ENCODE measurements at regions of chr9 and their contacts with region 1.

Region 1: GRCh38 chr9:101727612-101728524 is 10.6 kb downstream of the GRIN3A start:
- DNase-seq: no peak
- ATAC-seq: peak; percentile 82
- H3K4me3 ChIP-seq: no peak overlapping the region
- H3K27ac ChIP-seq: no peak overlapping the region
- H3K4me1 ChIP-seq: no peaks in the 10 kb centered on the region
- H3K27me3 ChIP-seq: no peaks in the 10 kb centered on the region
- CTCF ChIP-seq: peak; percentile 59 to 72 (median 71)
- EP300 ChIP-seq: no peak
- POLR2A ChIP-seq: no peak
- RAD21 ChIP-seq: peak; percentile 41

Region 2: DNA sequence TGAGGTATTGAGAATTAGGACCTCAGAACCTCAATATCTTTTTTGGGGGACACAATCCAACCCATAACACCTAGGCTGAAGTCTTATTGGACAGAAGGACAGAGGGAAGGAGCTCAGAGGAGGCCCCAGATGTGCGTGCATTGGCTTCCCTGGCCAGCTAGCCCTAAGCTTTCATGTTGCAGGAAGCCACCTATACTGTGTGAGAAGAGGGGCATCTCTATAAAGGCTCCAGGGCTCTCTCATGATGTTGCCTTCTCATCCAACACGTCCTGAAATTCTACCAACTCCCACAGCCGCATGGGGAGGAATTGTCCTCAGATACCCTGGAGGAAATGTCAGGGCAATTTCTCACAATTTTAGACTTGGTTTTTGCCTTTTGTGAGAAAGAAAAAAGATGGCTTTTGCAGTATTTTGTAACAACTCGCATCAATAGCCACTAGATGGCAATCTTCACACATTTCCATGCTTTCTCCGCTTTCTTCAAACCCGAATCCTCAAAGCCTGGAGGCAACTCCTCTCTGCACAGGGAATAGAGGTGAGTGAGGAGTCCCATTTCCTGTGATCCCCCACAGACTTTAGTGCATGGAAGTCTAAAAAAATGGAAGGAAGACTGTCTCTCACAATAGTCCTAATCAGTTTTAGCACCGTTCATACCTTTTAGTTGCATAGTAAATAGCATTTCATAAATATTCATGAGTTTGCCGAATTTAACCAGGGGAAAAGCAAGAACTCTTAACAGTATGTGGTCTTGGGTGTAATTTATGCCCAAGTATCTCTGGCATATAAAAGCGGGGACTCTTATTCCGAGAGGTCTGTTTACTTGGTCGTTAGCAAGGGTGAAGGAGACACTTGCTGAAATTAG is 125.7 kb before region 1 on chr9:
- CTCF ChIA-PET with region 1: interaction called, 6 read pairs
- POLR2A ChIA-PET with region 1: no interaction called
- RAD21 ChIA-PET with region 1: no interaction called
- SMC1A ChIA-PET with region 1: no interaction called
- in situ Hi-C with region 1: no loop called
- intact Hi-C with region 1: loop called (anchors 1 kb)
- DNase-seq: no peak
- ATAC-seq: peak; percentile 71
- H3K4me3 ChIP-seq: no peak overlapping the region
- H3K27ac ChIP-seq: no peak overlapping the region
- H3K4me1 ChIP-seq: no peaks in the 10 kb centered on the region
- H3K27me3 ChIP-seq: no peaks in the 10 kb centered on the region; a peak in 1 of 4 replicates
- CTCF ChIP-seq: peak; percentile 54 to 66 (median 59)
- EP300 ChIP-seq: no peak
- POLR2A ChIP-seq: no peak
- RAD21 ChIP-seq: peak; percentile 69

Region 3: DNA sequence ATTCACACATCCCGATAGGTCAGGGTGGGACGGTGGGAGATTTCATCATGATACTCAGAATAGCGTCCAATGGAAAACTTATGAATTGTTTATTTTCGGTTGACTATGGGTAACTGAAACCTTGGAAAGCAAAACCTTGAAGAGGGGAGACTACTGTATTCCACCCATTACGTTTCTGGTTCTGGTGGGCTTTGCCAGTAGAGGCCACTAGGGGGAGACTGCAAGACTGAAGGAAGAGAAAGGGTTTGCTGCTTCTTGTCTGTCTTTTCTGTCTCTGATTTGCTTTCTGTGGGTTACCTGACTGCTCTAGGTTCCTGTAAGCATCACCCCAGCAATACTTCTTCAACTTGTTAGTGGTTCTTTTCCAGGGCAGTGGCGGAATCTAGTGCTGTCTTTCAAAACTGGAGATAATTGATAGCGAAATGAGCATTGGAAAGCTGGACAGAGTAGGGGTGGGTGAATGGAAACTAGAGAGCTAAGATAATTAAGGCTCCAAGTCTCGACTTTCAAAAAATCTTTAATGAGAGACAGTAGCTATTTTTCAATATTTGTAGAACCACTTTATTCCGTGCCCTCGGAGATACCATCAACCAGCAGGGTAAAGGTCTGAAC is 16.4 kb before region 1 on chr9:
- CTCF ChIA-PET with region 1: interaction called, 11 read pairs
- POLR2A ChIA-PET with region 1: no interaction called
- RAD21 ChIA-PET with region 1: no interaction called
- SMC1A ChIA-PET with region 1: no interaction called
- in situ Hi-C with region 1: no loop called
- intact Hi-C with region 1: no loop called
- DNase-seq: no peak
- ATAC-seq: peak; percentile 75
- H3K4me3 ChIP-seq: no peak overlapping the region
- H3K27ac ChIP-seq: no peak overlapping the region
- H3K4me1 ChIP-seq: no peaks in the 10 kb centered on the region
- H3K27me3 ChIP-seq: no peaks in the 10 kb centered on the region; a peak in 1 of 4 replicates
- CTCF ChIP-seq: peak; percentile 47 to 89 (median 84)
- EP300 ChIP-seq: no peak
- POLR2A ChIP-seq: no peak
- RAD21 ChIP-seq: peak; percentile 36

Region 4: GRCh38 chr9:101881508-101881907 is 153.6 kb after region 1 on chr9:
- CTCF ChIA-PET with region 1: no interaction called
- POLR2A ChIA-PET with region 1: no interaction called
- RAD21 ChIA-PET with region 1: no interaction called
- SMC1A ChIA-PET with region 1: no interaction called
- in situ Hi-C with region 1: no loop called
- intact Hi-C with region 1: no loop called
- DNase-seq: no peak
- ATAC-seq: no peak
- H3K4me3 ChIP-seq: no peak overlapping the region
- H3K27ac ChIP-seq: no peak overlapping the region
- H3K4me1 ChIP-seq: no peaks in the 10 kb centered on the region
- H3K27me3 ChIP-seq: no peaks in the 10 kb centered on the region
- CTCF ChIP-seq: no peak
- EP300 ChIP-seq: no peak
- POLR2A ChIP-seq: no peak
- RAD21 ChIP-seq: no peak